GM13976 (cell line): ENCODE measurements at regions of chr19 and their contacts with region 1.

Region 1: GRCh38 chr19:28313633-28314032 is 899.3 kb downstream of the UQCRFS1 start:
- DNase-seq: no peak
- CTCF ChIP-seq: no peak

Region 2: DNA sequence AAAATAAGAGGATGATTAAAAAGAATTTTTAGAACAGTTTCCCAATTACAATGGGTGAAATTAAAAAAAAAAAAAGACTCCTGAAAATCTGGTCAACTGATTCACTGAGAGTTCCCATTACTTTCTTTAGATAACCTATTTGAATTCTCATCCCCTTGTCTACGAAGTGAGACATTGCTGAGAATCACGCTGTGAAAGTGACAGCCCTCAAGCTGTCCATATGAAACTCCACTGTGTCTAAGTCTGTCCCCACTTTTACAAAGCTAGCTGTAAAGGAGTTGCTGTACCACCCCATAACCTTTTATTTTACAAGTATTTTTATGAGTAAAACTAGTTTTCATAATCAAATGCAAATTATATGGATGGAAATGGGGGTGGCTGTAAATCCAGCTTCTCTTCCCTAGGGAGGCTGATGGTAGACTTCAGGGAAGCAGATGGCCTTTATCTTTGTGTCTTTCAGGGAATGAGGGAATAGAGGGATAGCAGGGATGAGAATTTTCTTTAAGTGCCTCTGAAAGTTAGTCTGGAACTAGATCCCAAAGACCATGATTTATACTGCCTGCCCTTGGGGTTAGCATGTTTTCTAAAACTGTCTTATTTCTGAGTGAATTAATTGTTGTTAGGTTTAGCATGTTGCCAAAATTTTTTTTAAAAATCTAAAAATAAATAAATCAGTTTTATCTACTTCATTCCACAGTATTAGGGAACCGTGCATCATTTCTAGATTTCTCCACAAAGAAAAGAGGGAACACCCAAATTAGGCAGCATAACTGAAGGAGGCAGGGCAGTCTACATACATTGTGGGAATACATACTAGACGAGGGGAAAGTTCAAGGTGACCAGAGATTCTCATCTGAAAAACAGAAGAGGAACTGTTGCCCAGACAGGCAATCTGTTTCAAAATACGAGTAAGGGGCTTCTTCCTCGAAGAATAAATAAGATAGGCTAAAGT is 319.7 kb before region 1 on chr19:
- in situ Hi-C with region 1: loop called (anchors 25 kb)
- DNase-seq: no peak
- CTCF ChIP-seq: no peak